ENCODE measurements at regions of chr20 and their contacts with region 1.

Region 1: GRCh38 chr20:24309596-24309995 is 159.8 kb upstream of the SYNDIG1 start:
- DNase-seq: no peak
- ATAC-seq: no peak
- H3K4me3 Mint-ChIP-seq: no peak overlapping the region
- H3K27ac Mint-ChIP-seq: no peak overlapping the region
- H3K4me1 Mint-ChIP-seq: no peaks in the 10 kb centered on the region
- H3K27me3 Mint-ChIP-seq: peaks cover 6% of the 10 kb centered on the region
- CTCF ChIP-seq: no peak

Region 2: DNA sequence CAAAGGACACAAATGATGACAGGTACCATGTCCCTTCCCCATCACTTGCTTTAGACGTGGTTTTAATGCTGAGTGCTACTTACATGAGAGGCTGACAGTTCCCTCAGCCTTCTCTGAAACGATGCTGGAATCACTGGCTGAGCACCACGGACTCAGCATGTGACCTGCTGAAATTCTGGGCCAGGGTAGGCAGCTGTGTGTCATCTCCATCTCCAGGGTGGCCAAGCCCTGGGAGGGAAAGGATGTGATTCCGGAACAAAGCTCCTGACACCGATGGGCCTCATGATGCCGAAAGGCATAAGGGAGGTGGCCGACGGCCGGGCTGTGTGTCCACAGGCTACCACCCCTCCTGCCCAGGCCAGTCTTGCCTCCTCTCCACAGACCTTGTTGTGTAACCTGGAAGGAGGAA is 455.2 kb after region 1 on chr20:
- CTCF ChIA-PET with region 1: no interaction called
- POLR2A ChIA-PET with region 1: interaction called, 21 read pairs
- intact Hi-C with region 1: no loop called
- DNase-seq: no peak
- ATAC-seq: no peak
- H3K4me3 Mint-ChIP-seq: no peak overlapping the region
- H3K27ac Mint-ChIP-seq: no peak overlapping the region
- H3K4me1 Mint-ChIP-seq: peaks cover 26% of the 10 kb centered on the region
- H3K27me3 Mint-ChIP-seq: peaks cover 4% of the 10 kb centered on the region
- CTCF ChIP-seq: no peak